GM13977 (cell line): ENCODE measurements at regions of chr22 and their contacts with region 1.

Region 1: GRCh38 chr22:25702040-25702439 is 39.9 kb upstream of the MYO18B start:
- DNase-seq: peak; percentile 42
- CTCF ChIP-seq: peak; percentile 50

Region 2: DNA sequence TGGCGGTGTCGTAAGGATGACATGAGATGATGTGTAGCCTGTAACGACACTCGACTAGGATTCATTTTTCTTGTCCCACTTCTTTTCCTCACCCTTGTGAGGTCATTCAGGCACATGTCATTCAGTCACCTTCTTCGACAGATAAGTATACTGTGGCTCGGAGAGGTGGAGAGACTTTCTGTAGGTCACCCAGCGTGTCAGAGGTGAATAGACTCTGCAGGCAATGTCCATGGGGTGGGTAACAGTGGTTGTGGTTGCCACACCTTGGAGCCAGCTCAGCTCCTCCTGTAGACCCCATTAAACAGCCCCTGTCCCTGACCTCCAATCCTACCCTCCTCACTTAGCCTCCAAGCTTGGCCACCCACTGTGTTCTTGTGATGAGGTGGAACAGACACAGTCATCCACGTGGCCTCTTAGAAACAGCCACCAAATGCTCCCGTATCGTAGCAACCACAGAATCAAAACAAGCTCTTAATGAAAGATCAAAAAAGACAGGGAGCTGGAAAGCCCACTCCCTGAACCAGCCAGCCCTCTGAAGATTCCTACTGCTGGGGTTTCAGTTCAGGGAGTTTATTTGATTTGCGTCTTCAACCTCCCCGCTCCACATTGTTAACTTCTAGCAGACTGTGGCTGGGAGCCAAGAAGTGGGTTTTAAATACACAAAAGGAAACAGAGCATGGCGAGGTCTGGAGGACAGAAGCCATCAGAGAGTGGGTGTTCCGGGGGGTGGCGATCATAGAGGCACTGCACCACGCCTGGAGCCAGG is 226.6 kb before region 1 on chr22:
- in situ Hi-C with region 1: loop called (anchors 10 kb)
- DNase-seq: no peak
- CTCF ChIP-seq: no peak

Region 3: GRCh38 chr22:25911243-25911972 is 209.4 kb after region 1 on chr22:
- in situ Hi-C with region 1: no loop called
- DNase-seq: no peak
- CTCF ChIP-seq: no peak